Colonic mucosa (tissue), 4 donors: ENCODE measurements at regions of chr20 and their contacts with region 1.

Region 1: DNA sequence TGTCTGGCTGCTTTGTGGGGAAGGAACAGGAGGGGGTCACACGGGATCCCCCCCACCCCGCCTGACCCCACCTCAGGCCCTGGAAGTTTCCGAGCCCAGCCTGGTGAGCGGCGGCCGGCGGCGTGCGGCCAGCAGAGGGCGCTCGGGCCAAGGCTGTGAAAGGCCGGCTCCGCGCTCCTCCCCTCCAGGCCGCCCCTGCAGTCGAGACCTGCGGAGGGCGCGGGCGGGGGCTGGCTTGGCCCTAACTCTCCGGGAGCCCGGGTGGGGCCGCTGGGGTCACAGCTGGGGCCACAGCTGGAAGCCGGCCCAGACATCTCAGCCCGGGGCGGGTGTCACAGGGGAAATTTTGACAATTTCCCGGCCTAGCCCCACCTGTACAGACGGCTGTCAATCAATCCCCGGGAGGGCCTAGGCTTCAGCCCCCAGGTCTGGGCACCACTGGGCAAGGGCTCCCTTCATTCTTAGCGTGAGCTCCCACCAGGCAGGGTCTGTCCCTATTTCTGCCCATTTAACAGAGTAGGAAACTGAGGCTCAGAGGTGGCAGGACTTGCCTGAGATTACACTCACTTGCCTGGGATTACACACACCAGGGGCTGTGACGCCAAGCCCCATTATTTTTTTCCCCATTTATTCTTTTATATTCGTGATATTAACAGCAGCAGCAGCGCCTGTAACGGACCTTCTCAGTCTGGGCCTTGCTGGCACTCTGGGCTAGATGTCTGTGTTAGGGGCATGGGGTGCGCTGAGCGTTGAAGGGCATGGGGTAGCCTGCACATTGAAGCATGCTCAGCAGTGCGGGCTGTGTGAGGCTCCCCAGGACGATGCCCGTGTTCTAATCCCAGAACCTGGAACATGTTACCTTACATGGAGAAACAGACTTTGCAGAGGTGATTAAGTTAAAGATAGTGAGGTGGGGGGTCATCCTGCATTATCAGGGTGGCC is 23.0 kb downstream of the ZBP1 start:
- DNase-seq: peak; percentile 78
- H3K4me3 ChIP-seq: peak overlapping the region; percentile 6
- H3K27ac ChIP-seq: no peak overlapping the region
- H3K4me1 ChIP-seq: peaks cover 4% of the 10 kb centered on the region
- H3K27me3 ChIP-seq: no peaks in the 10 kb centered on the region
- CTCF ChIP-seq: peak; percentile 98

Region 2: DNA sequence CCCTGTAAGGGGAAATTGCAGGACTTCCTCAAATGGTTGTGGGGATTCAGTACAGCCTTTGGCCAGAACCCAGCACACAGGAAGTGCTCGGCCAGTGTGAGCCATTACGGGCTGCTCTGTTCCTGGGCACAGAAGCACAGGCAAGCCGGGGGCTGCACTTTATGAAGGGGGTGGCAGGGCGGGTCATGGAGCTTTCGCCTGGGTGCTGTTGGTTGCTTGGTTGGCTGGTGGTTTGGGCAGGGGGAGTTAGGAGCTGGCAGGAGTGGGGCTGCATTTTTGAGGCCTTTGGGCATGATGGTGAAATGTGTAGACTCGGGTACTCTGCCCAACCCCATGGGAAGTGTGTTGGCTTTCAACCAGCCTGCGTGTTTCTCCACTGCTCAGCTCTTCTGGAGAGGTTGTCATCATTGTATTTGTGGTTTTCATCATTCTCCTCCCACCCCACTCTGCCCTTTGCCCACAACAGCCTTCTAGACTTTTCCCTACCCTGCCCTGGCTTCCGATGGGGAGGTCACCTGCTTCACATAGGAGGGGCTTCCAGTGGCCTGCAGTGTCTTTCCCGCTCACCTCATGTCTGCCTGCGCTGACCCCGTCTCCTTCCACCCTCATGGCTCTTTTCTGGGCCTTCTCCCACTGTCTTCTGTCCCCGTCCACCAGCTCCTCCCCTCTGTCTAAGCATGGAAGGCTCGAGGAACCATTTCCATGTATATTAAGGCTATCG is 222.2 kb before region 1 on chr20:
- intact Hi-C with region 1: loop called (anchors 10 kb)
- DNase-seq: no peak
- H3K4me3 ChIP-seq: no peak overlapping the region
- H3K27ac ChIP-seq: no peak overlapping the region
- H3K4me1 ChIP-seq: no peaks in the 10 kb centered on the region
- H3K27me3 ChIP-seq: no peaks in the 10 kb centered on the region
- CTCF ChIP-seq: no peak

Region 3: GRCh38 chr20:57514273-57514751 is 83.0 kb before region 1 on chr20:
- intact Hi-C with region 1: loop called (anchors 1 kb)
- DNase-seq: peak; percentile 79
- H3K4me3 ChIP-seq: no peak overlapping the region
- H3K27ac ChIP-seq: no peak overlapping the region
- H3K4me1 ChIP-seq: no peaks in the 10 kb centered on the region
- H3K27me3 ChIP-seq: no peaks in the 10 kb centered on the region
- CTCF ChIP-seq: peak; percentile 69

Region 4: DNA sequence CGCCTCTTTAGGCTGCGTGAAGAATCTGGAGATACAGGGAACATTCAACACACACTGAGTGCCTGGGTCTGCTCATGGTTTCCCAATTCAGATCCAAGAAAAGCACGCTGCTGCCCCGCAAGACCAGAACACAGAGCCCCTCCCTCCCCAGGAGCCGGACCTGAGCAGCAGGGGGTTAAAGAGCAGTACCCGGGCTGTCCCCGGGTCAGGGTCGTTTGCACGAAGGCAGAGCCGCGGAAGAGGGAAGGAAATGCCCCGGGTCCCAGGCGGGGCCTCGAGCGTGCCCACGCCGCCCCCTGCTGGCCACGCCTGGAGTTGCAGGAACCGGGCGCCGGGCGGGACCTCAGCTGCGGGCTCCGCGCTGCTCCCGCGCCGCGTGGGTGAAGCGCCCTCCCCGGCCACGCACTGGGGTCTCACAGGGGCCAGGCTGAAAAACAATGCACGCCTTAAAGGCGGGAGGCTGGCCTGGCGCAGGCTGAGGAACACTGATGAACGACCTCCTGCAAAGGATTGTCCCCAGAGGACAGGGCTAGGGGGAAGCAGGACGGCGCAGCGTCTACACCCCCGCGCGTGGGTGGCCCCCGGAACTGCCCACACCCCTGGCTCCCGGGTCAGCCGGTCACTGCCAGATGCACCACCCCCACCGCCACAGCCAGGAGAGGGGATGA is 582.3 kb after region 1 on chr20:
- intact Hi-C with region 1: loop called (anchors 10 kb)
- DNase-seq: peak; percentile 62
- H3K4me3 ChIP-seq: peak overlapping the region; percentile 19
- H3K27ac ChIP-seq: no peak overlapping the region
- H3K4me1 ChIP-seq: no peaks in the 10 kb centered on the region
- H3K27me3 ChIP-seq: no peaks in the 10 kb centered on the region
- CTCF ChIP-seq: peak; percentile 99

Region 5: DNA sequence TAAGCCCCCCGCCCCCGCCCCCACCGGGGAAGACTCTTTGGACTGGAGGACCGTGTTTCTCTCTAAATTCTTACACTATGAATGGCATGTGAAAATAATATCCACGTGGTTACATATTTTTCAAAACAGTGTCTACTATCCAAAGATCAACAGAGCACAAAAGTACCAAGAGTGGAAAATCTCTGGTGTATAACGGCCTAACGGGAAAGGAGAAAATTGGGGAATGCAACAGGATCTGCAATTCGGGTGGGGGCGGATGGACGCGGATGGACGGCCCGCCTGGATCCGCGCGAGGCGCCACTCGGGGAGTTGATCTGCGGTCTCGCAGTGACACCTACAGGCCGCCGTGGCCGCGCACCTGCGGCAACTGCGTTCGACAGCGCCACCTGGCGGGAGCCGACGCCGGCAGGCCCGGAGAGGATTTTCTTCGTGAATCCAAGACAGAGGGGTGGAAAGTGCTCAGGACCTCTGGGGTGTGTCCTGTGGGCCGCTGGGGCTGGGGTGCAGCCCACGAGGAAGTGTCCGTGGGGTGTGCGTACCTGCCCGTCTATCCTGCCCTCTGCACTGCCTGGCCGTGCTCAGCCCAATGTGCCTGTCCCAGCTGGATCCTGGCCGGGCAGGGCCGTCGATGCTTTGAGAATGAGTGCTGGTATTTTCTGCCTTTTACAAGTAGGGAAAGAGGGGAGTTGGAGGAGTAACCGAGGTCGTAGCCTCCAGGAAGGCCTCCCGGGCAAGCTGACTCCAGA is 612.6 kb after region 1 on chr20:
- intact Hi-C with region 1: loop called (anchors 2 kb)
- DNase-seq: peak; percentile 85
- H3K4me3 ChIP-seq: no peak overlapping the region
- H3K27ac ChIP-seq: no peak overlapping the region
- H3K4me1 ChIP-seq: no peaks in the 10 kb centered on the region
- H3K27me3 ChIP-seq: peaks cover 3% of the 10 kb centered on the region
- CTCF ChIP-seq: peak; percentile 100